ENCODE measurements at regions of chr12 and their contacts with region 1.

Region 1: DNA sequence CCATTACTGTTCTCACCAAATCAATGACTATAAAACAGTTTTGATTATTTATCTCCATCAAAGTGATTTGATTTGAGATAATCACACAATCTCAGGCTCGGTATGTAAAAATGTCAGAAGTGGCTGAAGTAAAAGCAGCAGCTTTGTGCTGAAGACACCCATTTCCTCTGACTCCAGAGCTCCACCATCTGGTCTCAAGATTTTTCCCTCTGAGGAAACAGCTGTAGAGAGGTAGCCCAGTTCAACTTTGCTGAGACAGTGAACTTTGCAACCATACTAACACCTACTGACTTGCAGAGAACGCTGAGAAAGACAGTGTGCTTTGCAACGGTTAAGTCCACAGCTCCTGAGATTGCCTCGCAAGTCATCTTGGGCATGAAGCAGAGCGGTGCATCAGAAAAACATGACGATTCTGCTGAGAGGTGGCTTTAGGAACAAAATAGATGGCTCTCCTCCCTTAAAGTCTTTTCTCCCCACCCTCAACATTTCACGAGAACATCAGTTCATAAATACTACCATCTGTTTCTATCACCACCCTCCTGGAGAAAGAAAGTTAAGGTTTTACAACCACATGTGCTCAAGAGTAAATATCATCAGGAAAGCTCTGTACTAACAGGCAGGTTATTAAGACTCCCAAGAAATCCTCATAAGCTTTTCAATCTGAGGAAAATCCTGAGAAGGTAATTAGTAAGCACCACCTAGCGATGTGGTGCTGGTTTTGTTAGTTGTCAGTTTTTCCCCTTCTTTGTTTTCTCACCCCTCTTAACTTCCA is 34.8 kb downstream of the HIGD1C start:
- DNase-seq: peak; percentile 52 to 80 (median 78)
- H3K4me3 ChIP-seq: no peak overlapping the region
- H3K27ac ChIP-seq: no peak overlapping the region
- H3K4me1 ChIP-seq: peaks cover 0 to 4% (median 2%) of the 10 kb centered on the region in 4 experiments
- H3K27me3 ChIP-seq: no peaks in the 10 kb centered on the region

Region 2: GRCh38 chr12:50763639-50764285 is 223.4 kb before region 1 on chr12 and contains the start of gene ATF1:
- CTCF ChIA-PET with region 1: interaction called, 46 read pairs
- POLR2A ChIA-PET with region 1: no interaction called
- DNase-seq: peak; percentile 96 to 98 (median 97)
- H3K4me3 ChIP-seq: peak within 1 kb of the TSS; percentile 68 to 97 (median 94)
- H3K27ac ChIP-seq: peak within 1 kb of the TSS; percentile 70 to 94
- H3K4me1 ChIP-seq: peaks cover 2 to 45% (median 34%) of the 10 kb centered on the region in 4 experiments
- H3K27me3 ChIP-seq: no peaks in the 10 kb centered on the region

Region 3: DNA sequence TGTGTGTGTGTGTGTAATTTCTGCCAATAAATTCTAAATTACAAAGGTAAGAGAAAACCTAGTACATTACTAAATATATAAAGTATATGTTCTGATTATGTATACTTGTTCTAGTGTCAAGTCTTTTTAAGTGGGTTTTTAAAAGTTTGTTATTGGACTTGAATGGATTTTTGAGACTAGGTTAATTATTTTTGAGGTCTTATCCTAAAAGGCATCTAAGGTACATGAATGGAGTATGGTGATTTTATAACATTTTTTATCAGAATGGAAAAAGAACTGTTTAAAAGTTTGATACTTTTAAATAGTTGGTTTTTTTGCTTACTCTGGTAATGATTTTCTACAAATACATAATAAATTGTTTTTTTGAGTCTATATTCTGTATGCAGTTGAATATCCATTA is 167.0 kb before region 1 on chr12:
- CTCF ChIA-PET with region 1: interaction called, 108 read pairs
- POLR2A ChIA-PET with region 1: no interaction called
- DNase-seq: no peak
- H3K4me3 ChIP-seq: no peak overlapping the region
- H3K27ac ChIP-seq: no peak overlapping the region
- H3K4me1 ChIP-seq: no peaks in the 10 kb centered on the region
- H3K27me3 ChIP-seq: no peaks in the 10 kb centered on the region

Region 4: DNA sequence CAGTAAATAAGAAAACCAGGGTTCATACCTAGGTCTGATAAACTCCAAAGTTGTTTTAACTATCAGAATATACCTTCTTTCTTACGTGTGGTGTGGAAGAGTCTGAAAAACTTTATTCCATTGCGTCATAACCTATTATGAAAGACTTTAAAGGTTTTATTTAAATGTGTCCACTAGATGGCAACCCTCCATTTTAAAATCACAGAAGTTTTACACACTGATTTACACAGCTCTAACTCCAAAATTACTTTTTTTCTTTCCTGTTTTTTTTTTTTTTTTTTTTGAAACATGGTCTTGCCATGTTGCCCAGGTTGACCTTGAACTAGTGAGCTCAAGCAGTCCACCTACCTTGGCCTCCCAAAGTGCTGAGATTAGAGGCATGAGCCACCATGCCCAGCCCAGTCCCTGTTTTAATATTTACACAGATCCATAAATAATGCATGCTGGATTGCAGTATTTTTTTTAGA is 161.7 kb before region 1 on chr12:
- CTCF ChIA-PET with region 1: interaction called, 108 read pairs
- POLR2A ChIA-PET with region 1: interaction called, 3 read pairs
- DNase-seq: peak; percentile 78 to 86 (median 82)
- H3K4me3 ChIP-seq: peak overlapping the region in 1 of 7 experiments; percentile 34
- H3K27ac ChIP-seq: peak overlapping the region in 1 of 2 experiments; percentile 52
- H3K4me1 ChIP-seq: no peaks in the 10 kb centered on the region
- H3K27me3 ChIP-seq: no peaks in the 10 kb centered on the region

Region 5: GRCh38 chr12:51000245-51000644 is 13.1 kb after region 1 on chr12:
- CTCF ChIA-PET with region 1: interaction called, 12 read pairs
- POLR2A ChIA-PET with region 1: interaction called, 4 read pairs
- DNase-seq: no peak
- H3K4me3 ChIP-seq: no peak overlapping the region
- H3K27ac ChIP-seq: no peak overlapping the region
- H3K4me1 ChIP-seq: no peaks in the 10 kb centered on the region
- H3K27me3 ChIP-seq: no peaks in the 10 kb centered on the region

Region 6: DNA sequence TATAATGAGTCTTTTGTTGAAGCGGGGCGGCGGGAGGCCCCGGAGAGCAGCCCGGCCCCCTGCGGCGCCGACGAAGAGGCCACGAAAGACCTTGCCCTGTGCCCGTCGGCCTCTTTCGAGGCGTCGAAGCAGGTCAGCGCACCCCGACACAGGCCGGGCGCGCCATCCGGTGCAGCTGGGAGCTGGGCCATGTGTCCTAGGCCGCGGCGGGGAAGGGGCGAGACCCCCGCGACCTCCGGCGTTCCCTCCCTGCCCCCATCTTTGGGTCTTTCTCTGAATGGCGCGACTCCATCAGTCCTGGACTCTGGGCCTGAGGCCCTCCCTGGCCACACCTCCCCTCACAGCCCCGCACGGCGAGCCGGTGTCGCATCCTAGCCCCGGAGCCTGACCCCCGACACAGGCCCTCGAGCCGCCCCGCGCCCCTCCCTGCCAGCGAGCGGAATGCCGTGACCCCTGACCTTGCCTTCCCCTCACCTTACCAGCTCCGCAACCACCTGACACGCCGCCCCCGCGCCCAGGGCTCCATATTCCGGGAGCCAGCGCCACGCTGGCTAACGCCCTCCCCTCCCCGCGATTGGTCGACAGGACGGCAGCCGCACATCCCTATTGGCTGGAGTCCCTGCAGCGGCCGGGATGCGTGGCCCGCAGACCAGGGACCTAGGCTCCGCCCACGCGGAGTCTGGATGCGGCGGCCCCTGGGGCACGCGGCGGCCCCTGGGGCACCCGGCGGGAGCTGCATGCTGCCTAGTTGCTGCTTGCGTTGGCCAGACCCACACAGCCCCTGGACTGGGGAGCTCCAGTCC is 38.9 kb after region 1 on chr12 and contains the start of gene SLC11A2:
- CTCF ChIA-PET with region 1: interaction called, 20 read pairs
- POLR2A ChIA-PET with region 1: no interaction called
- DNase-seq: peak; percentile 93 to 95 (median 95)
- H3K4me3 ChIP-seq: peak within 1 kb of the TSS; percentile 4 to 84 (median 74)
- H3K27ac ChIP-seq: peak within 1 kb of the TSS; percentile 52 to 84
- H3K4me1 ChIP-seq: peaks cover 17 to 50% (median 41%) of the 10 kb centered on the region in 4 experiments
- H3K27me3 ChIP-seq: no peaks in the 10 kb centered on the region